Activated CD8-positive, alpha-beta T cell treated with anti-CD3 and anti-CD28 coated beads for 36 hours (primary cell): ENCODE measurements at regions of chr1 and their contacts with region 1.

Region 1: GRCh38 chr1:244599937-244600350 is 53.0 kb upstream of the DESI2 start:
- DNase-seq: peak; percentile 67
- ATAC-seq: peak; percentile 93
- H3K4me3 Mint-ChIP-seq: peak overlapping the region; percentile 47
- H3K27ac Mint-ChIP-seq: peak overlapping the region; percentile 86
- H3K4me1 Mint-ChIP-seq: peaks cover 18% of the 10 kb centered on the region
- H3K27me3 Mint-ChIP-seq: peaks cover 6% of the 10 kb centered on the region
- CTCF ChIP-seq: no peak

Region 2: DNA sequence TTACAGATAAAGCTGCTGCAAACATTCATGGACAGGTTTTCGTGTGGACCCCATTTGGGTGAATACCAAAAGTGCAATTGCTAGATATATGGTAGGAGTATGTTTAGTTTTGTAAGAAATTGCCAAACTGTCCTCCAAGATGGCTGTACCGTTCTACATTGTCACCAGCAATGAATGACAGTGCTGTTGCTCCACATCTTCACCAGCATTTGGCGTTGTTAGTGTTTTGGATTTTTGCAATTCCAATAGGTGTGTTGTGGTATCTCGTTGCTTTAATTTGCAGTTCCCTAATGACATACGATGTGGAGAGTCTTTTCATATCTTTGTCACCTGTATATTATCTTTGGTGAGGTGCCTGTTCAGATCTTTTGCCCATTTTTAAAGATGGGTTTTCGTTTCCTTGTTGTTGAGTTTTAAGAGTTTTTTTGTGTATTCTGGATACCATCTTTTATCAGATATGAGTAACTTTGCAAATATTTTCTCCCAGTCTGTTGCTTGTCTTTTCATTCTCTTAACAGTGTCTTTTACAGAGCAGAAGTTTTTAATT is 126.8 kb before region 1 on chr1:
- CTCF ChIA-PET with region 1: no interaction called
- POLR2A ChIA-PET with region 1: no interaction called
- intact Hi-C with region 1: no loop called
- DNase-seq: no peak
- ATAC-seq: no peak
- H3K4me3 Mint-ChIP-seq: no peak overlapping the region
- H3K27ac Mint-ChIP-seq: no peak overlapping the region
- H3K4me1 Mint-ChIP-seq: no peaks in the 10 kb centered on the region
- H3K27me3 Mint-ChIP-seq: no peaks in the 10 kb centered on the region
- CTCF ChIP-seq: no peak

Region 3: GRCh38 chr1:244573768-244574167 is 26.2 kb before region 1 on chr1:
- CTCF ChIA-PET with region 1: no interaction called
- POLR2A ChIA-PET with region 1: no interaction called
- intact Hi-C with region 1: no loop called
- DNase-seq: no peak
- ATAC-seq: no peak
- H3K4me3 Mint-ChIP-seq: no peak overlapping the region
- H3K27ac Mint-ChIP-seq: no peak overlapping the region
- H3K4me1 Mint-ChIP-seq: no peaks in the 10 kb centered on the region
- H3K27me3 Mint-ChIP-seq: no peaks in the 10 kb centered on the region
- CTCF ChIP-seq: no peak

Region 4: GRCh38 chr1:244614113-244614836 is 14.3 kb after region 1 on chr1:
- CTCF ChIA-PET with region 1: interaction called, 12 read pairs
- POLR2A ChIA-PET with region 1: no interaction called
- intact Hi-C with region 1: no loop called
- DNase-seq: no peak
- ATAC-seq: no peak
- H3K4me3 Mint-ChIP-seq: no peak overlapping the region
- H3K27ac Mint-ChIP-seq: no peak overlapping the region
- H3K4me1 Mint-ChIP-seq: no peaks in the 10 kb centered on the region
- H3K27me3 Mint-ChIP-seq: no peaks in the 10 kb centered on the region
- CTCF ChIP-seq: no peak

Region 5: GRCh38 chr1:244636488-244637259 is 36.7 kb after region 1 on chr1:
- CTCF ChIA-PET with region 1: interaction called, 17 read pairs
- POLR2A ChIA-PET with region 1: no interaction called
- intact Hi-C with region 1: no loop called
- DNase-seq: no peak
- ATAC-seq: no peak
- H3K4me3 Mint-ChIP-seq: no peak overlapping the region
- H3K27ac Mint-ChIP-seq: no peak overlapping the region
- H3K4me1 Mint-ChIP-seq: no peaks in the 10 kb centered on the region
- H3K27me3 Mint-ChIP-seq: peaks cover 3% of the 10 kb centered on the region
- CTCF ChIP-seq: no peak

Region 6: DNA sequence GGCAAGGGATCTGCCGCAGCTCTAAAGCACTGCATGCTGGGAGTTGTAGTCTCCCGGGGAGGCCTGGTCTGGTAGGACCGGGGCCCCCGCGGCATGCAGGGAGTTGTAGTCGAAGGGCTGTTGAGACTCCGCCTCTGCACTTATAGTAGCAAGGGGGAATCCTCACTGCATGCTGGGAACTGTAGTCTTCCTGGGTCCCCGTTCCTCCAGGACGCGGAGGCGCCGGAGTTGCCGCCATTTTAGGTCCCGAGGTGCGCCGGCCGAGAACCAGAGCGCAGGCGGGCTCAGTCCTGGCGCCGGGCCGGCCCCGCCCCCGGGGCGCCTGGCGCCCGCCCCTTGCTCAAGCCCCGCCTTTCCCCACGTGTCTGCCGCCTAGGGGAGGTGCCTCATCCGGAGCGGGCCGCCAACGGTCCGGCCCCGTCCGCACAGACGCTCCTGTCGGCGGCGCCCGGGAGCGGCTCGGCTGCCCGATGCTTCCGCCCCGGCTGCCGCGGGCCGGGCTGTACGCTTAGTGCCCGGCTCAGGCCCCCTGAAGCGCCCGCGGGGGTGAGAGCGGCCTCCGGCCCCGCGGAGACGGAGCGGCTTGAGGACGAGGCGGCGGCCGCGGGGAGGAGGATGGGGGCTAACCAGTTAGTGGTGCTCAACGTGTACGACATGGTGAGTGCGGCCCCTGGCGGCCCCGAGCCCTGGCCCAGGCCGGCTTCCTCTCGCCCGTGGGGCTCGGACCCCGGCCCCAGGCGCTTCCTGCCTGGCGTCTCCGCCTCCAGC is 52.9 kb after region 1 on chr1 and contains the start of gene DESI2:
- CTCF ChIA-PET with region 1: interaction called, 10 read pairs
- POLR2A ChIA-PET with region 1: no interaction called
- intact Hi-C with region 1: no loop called
- DNase-seq: peak; percentile 98
- ATAC-seq: peak; percentile 95
- H3K4me3 Mint-ChIP-seq: peak within 1 kb of the TSS; percentile 79
- H3K27ac Mint-ChIP-seq: peak within 1 kb of the TSS; percentile 86
- H3K4me1 Mint-ChIP-seq: peaks cover 23% of the 10 kb centered on the region
- H3K27me3 Mint-ChIP-seq: no peaks in the 10 kb centered on the region
- CTCF ChIP-seq: peak; percentile 56
- total RNA-seq, gene DESI2: 30.4 to 31.1 TPM

Region 7: GRCh38 chr1:244730153-244730933 is 130.4 kb after region 1 on chr1:
- CTCF ChIA-PET with region 1: interaction called, 10 read pairs
- POLR2A ChIA-PET with region 1: no interaction called
- intact Hi-C with region 1: no loop called
- DNase-seq: peak; percentile 45
- ATAC-seq: peak; percentile 68
- H3K4me3 Mint-ChIP-seq: peak overlapping the region; percentile 78
- H3K27ac Mint-ChIP-seq: peak overlapping the region; percentile 30
- H3K4me1 Mint-ChIP-seq: peaks cover 8% of the 10 kb centered on the region
- H3K27me3 Mint-ChIP-seq: peaks cover 18% of the 10 kb centered on the region
- CTCF ChIP-seq: no peak